Activated CD4-positive, alpha-beta memory T cell treated with anti-CD3 and anti-CD28 coated beads, Interleukin-2, amount 10 ng/mL, durations not matched to agents 7 days and 5 days (primary cell): ENCODE measurements at regions of chr3 and their contacts with region 1.

Region 1: DNA sequence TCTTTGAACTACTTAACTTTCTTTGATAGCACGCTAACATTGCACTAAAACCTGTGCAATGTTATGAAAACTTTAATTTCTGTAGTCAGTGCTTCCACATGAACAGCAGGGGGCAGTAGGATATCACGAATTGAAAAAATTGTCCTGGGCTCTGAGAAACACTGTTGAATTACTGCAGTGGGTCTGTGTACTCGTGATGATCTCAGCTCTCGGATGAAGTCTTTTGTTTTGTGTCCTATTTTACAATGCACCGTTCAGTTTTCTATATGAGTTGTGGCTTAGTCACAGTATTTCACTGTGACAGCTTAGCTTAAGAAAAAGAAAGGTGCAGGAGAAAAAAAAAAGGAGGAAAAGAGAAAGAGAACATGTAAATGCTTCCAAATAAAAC is 141.3 kb upstream of the CCDC54 start:
- DNase-seq: peak; percentile 47
- H3K4me3 Mint-ChIP-seq: peak overlapping the region; percentile 40
- H3K27ac Mint-ChIP-seq: no peak overlapping the region
- H3K4me1 Mint-ChIP-seq: peaks cover 16% of the 10 kb centered on the region
- H3K27me3 Mint-ChIP-seq: peaks cover 10% of the 10 kb centered on the region

Region 2: DNA sequence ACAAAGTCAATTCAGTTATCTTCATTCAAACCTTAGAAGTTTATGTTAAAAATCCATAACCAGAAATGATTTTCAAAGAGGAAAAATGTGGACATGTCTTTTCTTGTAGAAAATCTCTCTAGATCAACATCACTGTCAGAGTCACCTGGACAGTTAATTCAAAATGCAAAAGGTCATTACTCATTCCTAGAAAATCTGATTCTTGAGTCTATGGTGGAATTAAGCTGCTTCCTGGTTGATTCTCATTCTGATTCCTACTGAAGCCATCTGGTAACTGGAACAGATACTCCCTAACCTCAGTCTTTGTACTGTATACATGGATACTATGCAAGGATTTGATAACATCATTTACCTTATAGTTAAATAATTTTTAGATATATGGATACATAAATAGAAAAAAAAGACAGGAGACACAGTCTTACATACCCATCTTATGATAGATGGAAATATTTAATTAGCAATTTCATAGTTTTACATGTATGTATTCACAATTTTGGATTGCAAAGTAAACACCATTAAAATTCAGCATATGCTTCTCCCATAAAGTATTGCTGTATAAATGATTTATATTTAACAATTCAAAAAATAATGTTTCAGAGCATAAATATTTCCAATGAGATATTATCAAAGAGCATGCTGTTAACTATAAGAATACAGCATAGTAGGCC is 551.8 kb before region 1 on chr3:
- CTCF ChIA-PET with region 1: no interaction called
- POLR2A ChIA-PET with region 1: no interaction called
- DNase-seq: no peak
- H3K4me3 Mint-ChIP-seq: no peak overlapping the region
- H3K27ac Mint-ChIP-seq: no peak overlapping the region
- H3K4me1 Mint-ChIP-seq: no peaks in the 10 kb centered on the region
- H3K27me3 Mint-ChIP-seq: peaks cover 6% of the 10 kb centered on the region

Region 3: GRCh38 chr3:107206141-107206540 is 29.8 kb before region 1 on chr3:
- CTCF ChIA-PET with region 1: no interaction called
- POLR2A ChIA-PET with region 1: no interaction called
- DNase-seq: no peak
- H3K4me3 Mint-ChIP-seq: no peak overlapping the region
- H3K27ac Mint-ChIP-seq: no peak overlapping the region
- H3K4me1 Mint-ChIP-seq: no peaks in the 10 kb centered on the region
- H3K27me3 Mint-ChIP-seq: peaks cover 25% of the 10 kb centered on the region

Region 4: GRCh38 chr3:107271787-107272387 is 36.0 kb after region 1 on chr3:
- CTCF ChIA-PET with region 1: interaction called, 12 read pairs
- POLR2A ChIA-PET with region 1: no interaction called
- DNase-seq: no peak
- H3K4me3 Mint-ChIP-seq: no peak overlapping the region
- H3K27ac Mint-ChIP-seq: no peak overlapping the region
- H3K4me1 Mint-ChIP-seq: no peaks in the 10 kb centered on the region
- H3K27me3 Mint-ChIP-seq: peaks cover 17% of the 10 kb centered on the region